Naive thymus-derived CD4-positive, alpha-beta T cell (primary cell): ENCODE measurements at regions of chr9 and their contacts with region 1.

Region 1: GRCh38 chr9:35814841-35815543 is at the start of gene HINT2:
- DNase-seq: peak; percentile 84 to 98 (median 96)
- ATAC-seq: peak; percentile 86
- H3K4me3 ChIP-seq: peak within 1 kb of the TSS; percentile 100
- H3K4me3 Mint-ChIP-seq: peak within 1 kb of the TSS; percentile 91 to 100 (median 96)
- H3K27ac ChIP-seq: peak within 1 kb of the TSS; percentile 77
- H3K27ac Mint-ChIP-seq: peak within 1 kb of the TSS; percentile 87 to 99 (median 95)
- H3K4me1 ChIP-seq: peaks cover 19 to 27% of the 10 kb centered on the region in 2 donors
- H3K4me1 Mint-ChIP-seq: peaks cover 23 to 43% (median 38%) of the 10 kb centered on the region in 7 donors
- H3K27me3 ChIP-seq: no peaks in the 10 kb centered on the region
- H3K27me3 Mint-ChIP-seq: peaks cover 0 to 12% (median 0%) of the 10 kb centered on the region in 5 donors
- total RNA-seq, gene HINT2: 14.3 to 50.7 (median 22.2) TPM

Region 2: DNA sequence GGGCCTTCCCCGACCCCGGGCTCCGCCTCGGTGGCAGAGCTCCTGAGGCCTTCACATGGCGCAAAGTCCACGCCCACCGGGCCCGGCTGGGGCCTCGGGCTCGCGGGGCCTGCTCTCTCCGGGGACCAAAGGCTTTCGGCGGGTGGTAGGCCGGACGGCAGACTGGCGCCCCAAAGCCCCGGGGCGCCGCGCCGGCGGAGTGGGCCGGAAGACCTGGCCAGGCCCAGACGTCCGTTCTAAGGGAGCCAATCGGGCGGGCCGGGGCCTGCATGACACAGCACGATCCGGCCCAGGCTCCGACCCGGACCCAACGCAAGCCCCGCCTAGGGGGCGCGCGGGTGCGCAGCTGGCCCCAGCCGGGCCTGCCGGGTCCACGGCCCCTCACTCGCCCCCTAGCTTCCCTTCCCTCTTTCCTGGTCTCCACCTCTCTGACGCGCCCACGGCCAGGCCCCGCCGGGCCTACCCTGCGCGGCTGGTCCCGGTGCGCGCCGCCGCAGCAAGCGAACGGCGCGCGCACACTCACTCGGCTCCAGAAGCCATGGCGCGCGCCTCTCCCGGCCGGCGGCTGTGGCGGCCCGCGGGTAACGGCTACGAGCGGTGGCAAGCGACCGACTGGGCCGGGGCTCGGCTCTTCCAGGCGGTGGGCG is 743.1 kb before region 1 on chr9:
- CTCF ChIA-PET with region 1: no interaction called
- POLR2A ChIA-PET with region 1: interaction called, 3 read pairs
- intact Hi-C with region 1: loop called (anchors 2 to 10 kb)
- DNase-seq: peak in 8 of 9 donors; percentile 67 to 83 (median 71)
- ATAC-seq: peak; percentile 70
- H3K4me3 ChIP-seq: peak overlapping the region; percentile 53
- H3K4me3 Mint-ChIP-seq: peak overlapping the region; percentile 74 to 95 (median 88)
- H3K27ac ChIP-seq: peak overlapping the region; percentile 93
- H3K27ac Mint-ChIP-seq: peak overlapping the region; percentile 81 to 96 (median 91)
- H3K4me1 ChIP-seq: peaks cover 22 to 43% of the 10 kb centered on the region in 2 donors
- H3K4me1 Mint-ChIP-seq: peaks cover 34 to 66% (median 53%) of the 10 kb centered on the region in 7 donors
- H3K27me3 ChIP-seq: no peaks in the 10 kb centered on the region
- H3K27me3 Mint-ChIP-seq: peaks cover 0 to 3% (median 0%) of the 10 kb centered on the region in 5 donors

Region 3: GRCh38 chr9:35657546-35658136 is 157.4 kb before region 1 on chr9 and contains the start of gene RMRP:
- CTCF ChIA-PET with region 1: no interaction called
- POLR2A ChIA-PET with region 1: interaction called, 4 read pairs
- intact Hi-C with region 1: loop called (anchors 1 kb)
- DNase-seq: peak; percentile 67 to 93 (median 91)
- ATAC-seq: peak; percentile 87
- H3K4me3 ChIP-seq: peak within 1 kb of the TSS; percentile 94
- H3K4me3 Mint-ChIP-seq: peak within 1 kb of the TSS; percentile 78 to 95 (median 90)
- H3K27ac ChIP-seq: peak within 1 kb of the TSS; percentile 99
- H3K27ac Mint-ChIP-seq: peak within 1 kb of the TSS; percentile 97 to 100 (median 100)
- H3K4me1 ChIP-seq: peaks cover 35 to 48% of the 10 kb centered on the region in 2 donors
- H3K4me1 Mint-ChIP-seq: peaks cover 42 to 78% (median 69%) of the 10 kb centered on the region in 7 donors
- H3K27me3 ChIP-seq: no peaks in the 10 kb centered on the region
- H3K27me3 Mint-ChIP-seq: peaks cover 0 to 6% (median 0%) of the 10 kb centered on the region in 5 donors
- total RNA-seq, gene RMRP: 5,750 to 11,273 (median 9,225) TPM

Region 4: DNA sequence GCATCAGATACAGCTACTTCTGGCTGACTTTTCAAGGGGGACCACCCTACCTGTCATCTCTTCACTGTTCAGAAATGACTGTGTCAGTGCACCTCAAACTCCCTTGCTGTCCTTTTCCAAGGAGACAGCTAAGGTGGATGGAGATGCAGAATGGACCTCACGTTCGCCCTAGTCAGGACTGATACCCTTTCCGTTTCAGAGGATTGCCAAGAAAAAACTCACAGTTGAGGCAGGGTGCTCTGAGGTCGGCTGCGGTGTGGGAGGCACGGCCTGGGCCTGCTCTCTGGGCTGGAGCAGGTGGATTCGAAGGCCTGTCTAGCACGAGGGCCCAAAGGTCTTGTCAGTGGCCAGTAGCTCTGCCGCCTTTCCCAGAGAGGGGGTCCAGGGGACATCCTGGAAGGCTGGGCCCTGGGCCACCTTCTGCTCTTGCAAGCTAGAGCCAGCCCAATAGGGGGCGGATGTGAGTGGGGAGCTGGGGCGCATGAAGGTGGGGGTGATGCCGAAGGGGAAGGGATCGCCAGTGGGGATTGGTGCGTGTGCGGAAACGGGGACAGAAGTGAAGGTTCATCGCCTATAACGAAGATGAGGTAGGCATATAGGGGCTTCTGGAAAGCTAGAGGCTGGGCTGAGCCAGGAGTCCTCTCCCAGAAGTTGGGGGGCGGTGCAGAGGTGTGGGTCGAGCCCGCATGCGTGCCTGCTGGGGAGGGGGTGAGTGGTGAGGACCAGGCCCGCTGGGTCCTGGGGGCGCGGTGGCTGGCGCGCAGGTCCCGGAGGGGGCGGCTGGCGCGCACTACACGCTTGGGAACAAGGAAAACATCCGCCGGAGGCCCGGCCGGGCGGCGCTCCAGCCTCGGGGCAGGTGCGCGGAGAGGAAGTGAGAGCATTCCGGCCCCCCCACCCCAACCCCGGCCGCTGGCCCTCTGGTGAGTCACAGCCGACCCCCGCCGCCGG is 58.4 kb before region 1 on chr9:
- CTCF ChIA-PET with region 1: no interaction called
- POLR2A ChIA-PET with region 1: interaction called, 8 read pairs
- intact Hi-C with region 1: loop called (anchors 1 to 2 kb)
- DNase-seq: peak; percentile 58 to 80 (median 75)
- ATAC-seq: peak; percentile 95
- H3K4me3 ChIP-seq: peak overlapping the region; percentile 92
- H3K4me3 Mint-ChIP-seq: peak overlapping the region; percentile 89 to 100 (median 96)
- H3K27ac ChIP-seq: peak overlapping the region; percentile 82
- H3K27ac Mint-ChIP-seq: peak overlapping the region; percentile 88 to 99 (median 94)
- H3K4me1 ChIP-seq: peaks cover 6 to 9% of the 10 kb centered on the region in 2 donors
- H3K4me1 Mint-ChIP-seq: peaks cover 34 to 61% (median 52%) of the 10 kb centered on the region in 7 donors
- H3K27me3 ChIP-seq: no peaks in the 10 kb centered on the region
- H3K27me3 Mint-ChIP-seq: no peaks in the 10 kb centered on the region

Region 5: DNA sequence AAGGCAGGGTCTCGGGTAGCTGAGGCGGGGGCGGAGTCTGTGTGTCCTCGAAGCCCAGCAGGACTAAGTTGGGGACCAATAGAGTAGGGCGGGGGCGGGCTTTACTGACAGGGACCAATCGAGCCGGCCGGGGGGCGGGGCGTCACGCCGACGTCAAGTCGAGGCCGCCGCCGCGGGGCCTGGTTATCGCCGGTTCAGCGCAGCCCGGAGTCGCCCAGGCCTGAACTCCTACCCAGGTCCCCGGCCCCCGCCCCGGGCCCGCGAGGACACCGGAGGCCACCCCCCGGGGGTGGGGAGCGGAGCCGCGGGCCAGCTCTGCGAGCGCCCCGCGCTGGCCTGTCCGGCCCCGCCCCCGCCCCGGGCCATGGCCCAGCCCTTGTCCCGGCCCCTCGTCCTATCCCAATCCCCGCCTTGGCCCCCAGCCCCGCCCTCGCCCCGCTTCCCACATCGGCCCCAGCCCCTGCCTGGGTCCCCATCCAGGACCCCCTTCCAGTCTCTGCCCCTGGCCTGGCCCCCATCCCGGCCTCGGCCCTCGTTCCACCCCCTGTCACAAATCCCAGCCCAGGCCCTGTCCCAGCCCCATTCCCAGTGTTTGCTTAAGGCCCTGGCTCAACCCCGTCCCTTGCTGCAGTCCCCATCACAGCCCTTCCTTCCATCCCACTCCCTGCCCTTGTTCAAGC is 14.2 kb after region 1 on chr9 and contains the start of gene TMEM8B:
- CTCF ChIA-PET with region 1: interaction called, 15 read pairs
- POLR2A ChIA-PET with region 1: interaction called, 18 read pairs
- intact Hi-C with region 1: loop called (anchors 1 kb)
- DNase-seq: peak; percentile 80 to 95 (median 88)
- ATAC-seq: peak; percentile 95
- H3K4me3 ChIP-seq: peak within 1 kb of the TSS; percentile 88
- H3K4me3 Mint-ChIP-seq: peak within 1 kb of the TSS; percentile 84 to 100 (median 94)
- H3K27ac ChIP-seq: peak within 1 kb of the TSS; percentile 94
- H3K27ac Mint-ChIP-seq: peak within 1 kb of the TSS; percentile 91 to 99 (median 94)
- H3K4me1 ChIP-seq: peaks cover 4 to 14% of the 10 kb centered on the region in 2 donors
- H3K4me1 Mint-ChIP-seq: peaks cover 25 to 48% (median 43%) of the 10 kb centered on the region in 7 donors
- H3K27me3 ChIP-seq: no peaks in the 10 kb centered on the region
- H3K27me3 Mint-ChIP-seq: peaks cover 0 to 5% (median 0%) of the 10 kb centered on the region in 5 donors
- total RNA-seq, gene TMEM8B: 3.9 to 11.6 (median 10.6) TPM

Region 6: DNA sequence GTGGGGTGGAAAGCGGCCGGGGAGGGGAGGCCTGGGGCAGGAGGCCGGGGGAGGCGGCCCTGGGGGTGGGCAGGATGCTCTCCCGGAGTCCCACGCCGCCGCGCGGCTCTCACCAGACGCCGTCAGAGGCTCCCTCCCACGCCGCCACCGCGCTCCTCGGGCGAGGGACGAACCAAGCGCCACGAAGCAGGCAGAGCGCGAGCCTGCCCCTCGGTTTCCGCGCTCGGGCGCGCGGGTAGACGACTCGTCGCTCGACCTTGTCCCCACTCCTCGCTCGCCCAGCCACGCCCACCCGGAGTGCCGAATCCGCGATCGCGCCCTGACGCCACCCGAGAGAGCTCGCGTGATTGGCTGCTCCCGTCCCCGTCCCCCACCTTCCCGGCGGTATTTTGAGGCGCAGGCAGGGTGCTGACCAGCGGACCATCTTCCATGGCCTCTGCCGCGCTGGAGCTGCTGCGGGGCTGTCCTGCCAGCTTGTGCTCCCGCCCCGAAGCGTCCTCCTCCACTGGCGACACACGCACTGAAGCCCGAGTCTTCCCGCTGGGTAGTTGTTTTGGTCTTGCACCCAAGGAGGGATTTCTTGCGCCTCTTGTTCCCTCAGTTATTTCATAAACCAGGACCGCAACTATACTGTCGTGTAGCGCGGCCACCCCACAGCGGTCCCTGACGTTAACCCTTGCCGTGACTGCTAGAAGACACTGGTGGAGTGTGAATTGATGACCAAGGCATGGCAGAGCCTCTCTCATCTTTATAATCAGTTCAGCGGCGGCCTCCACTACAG is 443.4 kb after region 1 on chr9 and contains the start of gene GNE:
- CTCF ChIA-PET with region 1: no interaction called
- POLR2A ChIA-PET with region 1: no interaction called
- intact Hi-C with region 1: loop called in 1 of 2 experiments (anchors 2 kb)
- DNase-seq: peak; percentile 92 to 99 (median 96)
- ATAC-seq: peak; percentile 96
- H3K4me3 ChIP-seq: peak within 1 kb of the TSS; percentile 98
- H3K4me3 Mint-ChIP-seq: peak within 1 kb of the TSS; percentile 96 to 100 (median 98)
- H3K27ac ChIP-seq: peak within 1 kb of the TSS; percentile 93
- H3K27ac Mint-ChIP-seq: peak within 1 kb of the TSS; percentile 92 to 98 (median 96)
- H3K4me1 ChIP-seq: peaks cover 7 to 9% of the 10 kb centered on the region in 2 donors
- H3K4me1 Mint-ChIP-seq: peaks cover 0 to 14% (median 12%) of the 10 kb centered on the region in 7 donors
- H3K27me3 ChIP-seq: no peaks in the 10 kb centered on the region
- H3K27me3 Mint-ChIP-seq: peaks cover 0 to 2% (median 0%) of the 10 kb centered on the region in 5 donors
- total RNA-seq, gene GNE: 12.6 to 18.5 (median 16.0) TPM